ENCODE measurements at regions of chr4 and their contacts with region 1.

Region 1: GRCh38 chr4:177339477-177340374 is 30.1 kb downstream of the NEIL3 start:
- DNase-seq: no peak
- H3K4me3 ChIP-seq: no peak overlapping the region
- H3K27ac ChIP-seq: no peak overlapping the region
- H3K4me1 ChIP-seq: no peaks in the 10 kb centered on the region
- H3K27me3 ChIP-seq: no peaks in the 10 kb centered on the region
- CTCF ChIP-seq: peak; percentile 50

Region 2: GRCh38 chr4:176789955-176790354 is 549.8 kb before region 1 on chr4:
- intact Hi-C with region 1: loop called (anchors 10 kb)
- DNase-seq: no peak
- H3K4me3 ChIP-seq: no peak overlapping the region
- H3K27ac ChIP-seq: no peak overlapping the region
- H3K4me1 ChIP-seq: no peaks in the 10 kb centered on the region
- H3K27me3 ChIP-seq: peaks cover 9% of the 10 kb centered on the region
- CTCF ChIP-seq: peak; percentile 28

Region 3: GRCh38 chr4:177023951-177024350 is 315.8 kb before region 1 on chr4:
- intact Hi-C with region 1: no loop called
- DNase-seq: no peak
- H3K4me3 ChIP-seq: no peak overlapping the region
- H3K27ac ChIP-seq: no peak overlapping the region
- H3K4me1 ChIP-seq: no peaks in the 10 kb centered on the region
- H3K27me3 ChIP-seq: no peaks in the 10 kb centered on the region
- CTCF ChIP-seq: no peak

Region 4: DNA sequence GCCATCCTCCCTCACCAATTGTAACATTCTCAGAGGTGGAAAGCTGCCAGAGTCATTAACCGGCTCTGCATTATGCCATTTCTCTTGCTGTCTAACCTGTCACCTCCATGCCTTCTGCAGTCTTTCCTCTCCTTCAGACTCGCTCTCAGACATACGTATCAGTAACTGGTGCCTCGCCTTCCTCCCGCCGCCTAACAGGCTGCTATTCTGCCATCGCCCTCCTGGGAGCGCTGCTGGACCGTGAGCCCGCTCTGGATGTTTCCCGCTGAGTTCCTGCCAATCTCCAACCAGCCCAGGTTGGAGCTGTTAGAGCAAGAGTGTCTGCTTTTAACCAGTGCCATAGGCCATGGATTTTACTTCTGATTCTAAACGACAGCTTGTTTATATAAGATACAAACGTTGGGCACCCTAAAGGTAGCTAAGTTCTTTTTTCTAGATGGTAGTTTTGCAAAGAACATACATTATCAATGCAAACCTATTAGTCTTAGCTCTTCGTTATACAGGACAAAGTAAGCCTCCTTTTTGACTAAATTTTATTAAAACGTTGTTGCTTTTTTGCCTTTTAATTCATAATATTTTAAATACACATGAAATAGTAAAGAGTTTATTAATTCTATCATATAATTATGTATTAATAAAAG is 89.5 kb before region 1 on chr4:
- intact Hi-C with region 1: loop called (anchors 10 kb)
- DNase-seq: peak; percentile 65
- H3K4me3 ChIP-seq: no peak overlapping the region
- H3K27ac ChIP-seq: no peak overlapping the region
- H3K4me1 ChIP-seq: no peaks in the 10 kb centered on the region
- H3K27me3 ChIP-seq: no peaks in the 10 kb centered on the region
- CTCF ChIP-seq: peak; percentile 88